ENCODE measurements at regions of chr20 and their contacts with region 1.

Region 1: DNA sequence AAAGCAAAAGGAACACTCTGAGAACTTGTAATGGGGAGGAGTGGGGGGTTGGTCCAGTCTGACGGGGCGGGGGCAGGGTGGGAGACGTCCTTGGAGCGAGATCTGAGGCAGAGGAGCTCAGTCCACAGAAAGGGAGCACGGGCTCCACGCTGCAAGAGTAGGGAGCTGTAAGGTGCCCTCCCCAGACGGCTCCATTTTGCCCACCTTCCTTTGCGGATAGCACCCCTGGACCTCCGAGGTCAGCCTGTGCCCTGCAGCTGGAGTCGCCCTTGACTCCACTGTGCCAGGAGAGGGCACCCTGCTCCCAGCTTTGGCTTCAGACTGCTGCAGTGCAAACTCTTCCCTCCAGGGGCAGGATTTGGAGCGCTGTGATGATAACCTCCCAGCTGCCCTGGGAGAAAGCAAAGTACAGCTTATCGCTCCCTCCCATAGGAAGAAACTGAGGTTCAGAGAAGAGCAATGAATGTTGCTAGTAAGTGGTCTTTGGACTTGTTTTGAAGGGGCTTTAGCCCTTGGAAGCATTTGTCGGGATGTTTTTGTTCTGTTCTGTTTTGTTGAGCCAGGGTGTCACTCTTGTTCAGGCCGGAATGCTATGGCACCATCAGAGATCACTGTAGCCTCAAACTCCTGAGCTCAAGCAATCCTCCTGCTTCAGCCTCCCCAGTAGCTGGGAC is 9.5 kb upstream of the AHCY start:
- DNase-seq: no peak
- H3K4me3 ChIP-seq: peak overlapping the region; percentile 20 to 26
- H3K27ac ChIP-seq: no peak overlapping the region
- H3K4me1 ChIP-seq: peaks cover 17% of the 10 kb centered on the region
- H3K27me3 ChIP-seq: no peaks in the 10 kb centered on the region
- CTCF ChIP-seq: peak; percentile 98 to 99 (median 99)
- POLR2A ChIP-seq: no peak

Region 2: DNA sequence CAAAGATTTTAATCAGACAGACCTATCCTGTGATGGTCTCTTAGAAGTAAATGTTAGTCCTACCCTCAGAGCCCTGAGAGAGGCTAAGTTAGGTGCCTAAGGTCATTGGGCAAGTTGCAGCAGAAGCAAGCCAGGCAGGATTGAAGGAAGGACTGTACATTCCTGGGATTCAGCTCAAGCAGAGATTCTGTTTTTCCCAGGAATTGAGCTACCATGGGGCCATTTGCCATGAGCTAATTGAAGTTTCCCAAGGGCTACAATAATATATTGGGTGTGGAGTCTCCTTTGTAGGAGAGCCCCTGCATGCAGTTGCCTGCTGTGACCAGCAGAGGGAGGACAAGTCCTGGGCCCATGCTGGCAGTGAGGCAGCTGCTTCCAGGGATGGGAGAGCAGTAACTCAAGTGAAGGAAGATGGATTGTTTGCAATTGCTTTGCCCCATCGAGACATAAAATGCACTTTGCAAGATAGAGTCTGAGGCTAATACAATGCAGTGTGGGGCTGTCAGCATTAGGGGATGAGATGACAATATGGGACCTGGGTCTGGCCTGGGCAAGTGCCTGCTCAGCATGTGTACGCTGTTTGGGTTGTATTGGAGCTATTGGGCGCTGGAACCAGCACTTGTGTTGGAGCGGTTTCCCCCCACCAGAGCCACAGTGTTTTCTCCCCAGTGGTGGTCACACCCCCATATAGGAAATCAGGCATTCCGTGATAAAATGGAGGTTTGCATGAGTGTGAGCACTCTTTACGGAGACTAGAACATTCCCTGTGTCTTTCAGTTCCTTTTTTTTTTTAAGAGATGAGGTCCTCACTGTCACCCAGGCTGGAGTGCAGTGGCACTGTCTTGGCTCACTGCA is 1522.6 kb before region 1 on chr20:
- intact Hi-C with region 1: no loop called
- DNase-seq: no peak
- H3K4me3 ChIP-seq: no peak overlapping the region
- H3K27ac ChIP-seq: no peak overlapping the region
- H3K4me1 ChIP-seq: peaks cover 3% of the 10 kb centered on the region
- H3K27me3 ChIP-seq: no peaks in the 10 kb centered on the region
- CTCF ChIP-seq: peak; percentile 86 to 96 (median 93)
- POLR2A ChIP-seq: no peak

Region 3: DNA sequence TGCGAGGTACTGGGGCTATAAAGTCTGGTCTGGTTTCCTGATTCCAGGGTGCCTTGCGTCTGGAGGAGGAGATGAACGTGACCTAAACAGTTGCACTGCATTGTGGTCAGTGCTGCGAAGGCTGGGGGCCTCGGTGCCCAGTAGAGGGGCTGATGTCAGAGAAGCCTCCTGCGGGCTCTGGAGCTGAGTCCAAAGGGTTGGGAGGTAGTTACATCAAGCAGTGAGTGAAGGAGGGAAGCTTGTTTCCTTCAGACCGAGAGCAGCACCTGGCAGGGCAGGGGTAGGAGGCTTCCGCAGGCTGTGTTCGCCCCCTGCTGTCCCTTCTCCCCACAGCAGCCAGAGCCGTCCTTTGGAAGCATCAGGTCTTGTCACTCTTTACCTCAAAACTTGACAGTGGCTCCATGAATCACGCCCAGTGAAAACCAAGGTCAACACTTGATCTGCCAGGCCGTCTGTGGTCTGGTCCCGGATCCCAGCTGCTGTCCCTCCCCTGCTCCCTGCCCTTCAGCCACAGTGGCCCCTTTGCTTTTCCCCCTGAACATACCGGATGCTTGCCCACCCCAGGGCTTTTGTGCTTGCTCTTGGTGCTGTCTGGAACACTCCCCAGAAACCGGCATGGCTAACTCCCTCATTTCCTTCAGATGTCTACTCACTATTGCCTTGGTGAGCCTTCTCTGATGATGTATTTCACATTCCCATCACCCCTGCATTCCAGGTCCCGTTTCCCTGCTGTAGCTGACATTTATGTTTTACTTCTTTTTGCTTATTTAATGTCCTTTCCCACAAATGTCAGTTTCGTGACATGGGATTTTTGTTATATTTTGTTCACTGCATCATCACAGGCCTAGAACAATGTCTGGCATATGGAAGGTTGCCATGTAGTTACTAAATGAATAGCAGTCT is 210.5 kb after region 1 on chr20:
- intact Hi-C with region 1: loop called (anchors 10 kb)
- DNase-seq: peak in 1 of 2 donors; percentile 81
- H3K4me3 ChIP-seq: no peak overlapping the region
- H3K27ac ChIP-seq: peak overlapping the region; percentile 78
- H3K4me1 ChIP-seq: peaks cover 82% of the 10 kb centered on the region
- H3K27me3 ChIP-seq: no peaks in the 10 kb centered on the region
- CTCF ChIP-seq: peak in 2 of 3 experiments; percentile 8 to 34
- POLR2A ChIP-seq: no peak

Region 4: DNA sequence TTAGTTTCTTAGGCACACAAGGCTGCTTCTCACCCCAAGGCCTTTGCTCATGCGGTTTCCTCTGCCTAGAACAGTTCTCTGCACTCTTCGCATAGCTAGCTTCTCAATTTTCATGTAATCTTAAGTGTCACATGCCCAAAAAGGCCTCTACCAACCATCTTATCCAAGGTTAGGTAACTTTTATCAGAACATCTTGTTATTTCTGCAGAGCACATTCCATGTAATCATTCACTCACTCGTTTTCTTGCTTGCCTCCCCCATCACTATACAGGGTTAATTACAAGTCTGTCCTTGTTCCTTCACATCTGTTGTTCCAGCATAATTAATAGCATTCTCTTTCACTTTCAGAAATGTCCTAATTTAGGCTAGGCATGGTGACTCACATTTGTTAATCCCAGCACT is 459.0 kb after region 1 on chr20:
- intact Hi-C with region 1: loop called (anchors 10 kb)
- DNase-seq: no peak
- H3K4me3 ChIP-seq: no peak overlapping the region
- H3K27ac ChIP-seq: no peak overlapping the region
- H3K4me1 ChIP-seq: no peaks in the 10 kb centered on the region
- H3K27me3 ChIP-seq: no peaks in the 10 kb centered on the region
- CTCF ChIP-seq: no peak
- POLR2A ChIP-seq: no peak